ENCODE measurements at regions of chr4 and their contacts with region 1.

Region 1: DNA sequence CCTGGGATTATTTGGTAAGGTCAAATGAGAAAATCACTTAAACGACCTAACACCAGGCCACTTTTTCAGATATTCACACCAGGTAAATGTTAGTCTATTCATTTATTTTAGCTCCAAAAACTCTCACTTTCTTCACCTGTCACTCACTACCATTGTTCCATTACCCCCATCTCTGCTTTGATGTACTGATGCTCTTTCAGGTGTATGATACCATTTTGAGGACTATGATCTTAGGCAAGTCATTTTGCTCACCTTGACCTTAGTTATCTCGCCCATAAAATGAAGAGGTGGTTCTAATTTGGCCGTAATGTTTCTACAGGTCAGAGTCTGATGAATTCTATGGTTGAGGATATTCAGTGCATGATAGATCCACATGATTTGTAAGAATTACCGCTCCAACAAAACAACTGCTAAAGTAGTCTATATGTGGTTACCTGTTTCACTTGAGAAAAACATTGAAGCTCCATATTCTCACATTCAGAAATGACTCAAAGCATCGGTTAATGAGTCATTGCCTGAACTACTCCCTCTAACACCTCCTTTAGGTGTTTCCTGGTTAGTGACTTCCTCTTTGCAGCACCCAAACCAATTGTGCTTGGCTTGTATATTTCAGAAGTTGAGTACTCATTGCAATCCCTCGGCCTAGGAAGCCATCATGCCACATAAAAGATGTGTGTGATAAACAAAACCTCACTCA is 4.5 kb downstream of the DTHD1 start:
- DNase-seq: peak; percentile 77 to 85 (median 81)
- H3K4me3 ChIP-seq: peak overlapping the region in 1 of 2 donors; percentile 8
- H3K4me3 Mint-ChIP-seq: peak overlapping the region; percentile 49 to 87 (median 74)
- H3K27ac ChIP-seq: peak overlapping the region; percentile 74
- H3K27ac Mint-ChIP-seq: peak overlapping the region; percentile 85 to 98 (median 92)
- H3K4me1 ChIP-seq: peaks cover 37% of the 10 kb centered on the region
- H3K4me1 Mint-ChIP-seq: peaks cover 24 to 48% (median 34%) of the 10 kb centered on the region in 4 donors
- H3K27me3 ChIP-seq: no peaks in the 10 kb centered on the region
- H3K27me3 Mint-ChIP-seq: no peaks in the 10 kb centered on the region

Region 2: DNA sequence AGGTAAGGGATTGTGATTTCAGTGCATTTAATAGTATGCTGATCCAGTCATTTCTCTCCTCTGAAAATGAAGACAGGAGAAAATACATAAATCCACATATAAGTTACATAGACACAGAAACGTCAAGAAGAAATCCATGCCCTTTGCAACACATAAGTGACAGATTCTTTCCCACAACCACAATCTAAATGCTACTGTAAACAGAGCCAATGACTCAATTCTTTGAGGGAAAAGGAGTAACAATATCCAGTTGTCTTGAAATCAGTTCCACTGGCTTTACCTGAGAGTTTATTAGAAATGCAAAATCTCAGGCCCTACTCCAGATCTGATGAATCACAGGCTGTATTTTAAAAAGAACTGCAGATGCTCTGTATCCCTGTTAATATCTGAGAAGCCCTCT is 108.0 kb before region 1 on chr4:
- CTCF ChIA-PET with region 1: no interaction called
- POLR2A ChIA-PET with region 1: no interaction called
- intact Hi-C with region 1: no loop called
- DNase-seq: no peak
- H3K4me3 ChIP-seq: no peak overlapping the region
- H3K4me3 Mint-ChIP-seq: no peak overlapping the region
- H3K27ac ChIP-seq: no peak overlapping the region
- H3K27ac Mint-ChIP-seq: no peak overlapping the region
- H3K4me1 ChIP-seq: no peaks in the 10 kb centered on the region
- H3K4me1 Mint-ChIP-seq: peaks cover 14 to 20% (median 16%) of the 10 kb centered on the region in 4 donors
- H3K27me3 ChIP-seq: no peaks in the 10 kb centered on the region
- H3K27me3 Mint-ChIP-seq: no peaks in the 10 kb centered on the region

Region 3: DNA sequence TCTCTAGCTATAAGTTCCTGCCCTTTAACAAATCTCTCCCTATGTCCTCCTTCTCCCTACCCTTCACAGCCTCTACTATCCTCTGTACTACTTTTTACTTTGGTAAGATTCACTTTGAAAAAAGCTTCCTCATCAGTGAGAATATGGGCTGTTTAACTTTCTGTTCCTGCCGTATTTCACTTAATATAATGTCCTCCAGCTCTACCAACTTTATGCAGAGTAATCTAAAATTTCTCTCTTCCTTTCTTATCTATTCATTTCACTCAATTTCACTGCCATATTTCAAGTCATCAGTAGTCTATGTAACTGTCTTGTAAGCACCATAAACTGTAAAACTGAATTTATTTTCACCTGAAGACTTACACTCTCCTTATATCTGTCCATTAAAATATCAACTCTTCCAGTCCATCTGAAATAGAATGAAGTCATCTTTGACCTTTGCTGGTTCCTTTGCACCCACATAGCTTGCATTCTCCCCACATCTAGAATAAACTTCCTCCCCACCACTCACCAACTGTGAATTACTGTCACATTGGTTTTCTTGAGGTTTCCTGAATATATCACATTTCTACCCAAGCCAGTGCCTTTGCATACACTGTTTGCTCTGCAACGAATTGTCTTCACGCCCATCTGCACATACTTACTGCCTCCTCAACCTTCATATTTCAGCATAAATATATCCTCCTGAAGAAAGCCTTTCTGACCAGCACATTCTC is 96.3 kb before region 1 on chr4:
- CTCF ChIA-PET with region 1: no interaction called
- POLR2A ChIA-PET with region 1: interaction called, 3 read pairs
- intact Hi-C with region 1: loop called (anchors 5 kb)
- DNase-seq: peak; percentile 14 to 39 (median 19)
- H3K4me3 ChIP-seq: no peak overlapping the region
- H3K4me3 Mint-ChIP-seq: peak overlapping the region in 7 of 8 donors; percentile 32 to 70 (median 51)
- H3K27ac ChIP-seq: no peak overlapping the region
- H3K27ac Mint-ChIP-seq: peak overlapping the region; percentile 24 to 76 (median 53)
- H3K4me1 ChIP-seq: peaks cover 42% of the 10 kb centered on the region
- H3K4me1 Mint-ChIP-seq: peaks cover 23 to 40% (median 32%) of the 10 kb centered on the region in 4 donors
- H3K27me3 ChIP-seq: no peaks in the 10 kb centered on the region
- H3K27me3 Mint-ChIP-seq: no peaks in the 10 kb centered on the region

Region 4: GRCh38 chr4:36208893-36209473 is 76.9 kb before region 1 on chr4:
- CTCF ChIA-PET with region 1: no interaction called
- POLR2A ChIA-PET with region 1: interaction called, 3 read pairs
- intact Hi-C with region 1: loop called (anchors 5 kb)
- DNase-seq: peak; percentile 33 to 48 (median 43)
- H3K4me3 ChIP-seq: no peak overlapping the region
- H3K4me3 Mint-ChIP-seq: peak overlapping the region in 7 of 8 donors; percentile 25 to 85 (median 64)
- H3K27ac ChIP-seq: no peak overlapping the region
- H3K27ac Mint-ChIP-seq: peak overlapping the region; percentile 4 to 91 (median 66)
- H3K4me1 ChIP-seq: peaks cover 40% of the 10 kb centered on the region
- H3K4me1 Mint-ChIP-seq: peaks cover 37 to 78% (median 54%) of the 10 kb centered on the region in 4 donors
- H3K27me3 ChIP-seq: no peaks in the 10 kb centered on the region
- H3K27me3 Mint-ChIP-seq: no peaks in the 10 kb centered on the region

Region 5: DNA sequence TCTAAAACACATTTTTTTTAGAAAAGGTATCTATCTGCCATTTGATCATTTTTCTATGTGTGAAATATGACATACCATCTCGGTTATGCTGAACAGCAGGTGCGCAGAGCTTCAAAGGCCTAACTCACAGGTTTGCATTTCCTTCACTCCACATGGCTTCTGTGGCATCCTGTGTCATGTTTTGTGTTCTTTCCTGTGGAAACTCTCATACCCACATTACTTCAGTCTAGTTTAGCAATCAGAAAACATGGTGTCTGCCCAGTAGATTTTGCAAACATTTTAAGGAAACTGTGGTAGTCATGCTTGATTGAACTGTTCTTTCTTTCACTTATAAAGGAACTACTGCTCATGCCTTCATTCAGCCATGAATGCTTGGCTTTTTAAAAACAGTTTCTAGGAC is 30.4 kb before region 1 on chr4:
- CTCF ChIA-PET with region 1: interaction called, 16 read pairs
- POLR2A ChIA-PET with region 1: interaction called, 101 read pairs
- intact Hi-C with region 1: loop called (anchors 1 kb)
- DNase-seq: peak; percentile 83 to 91 (median 89)
- H3K4me3 ChIP-seq: no peak overlapping the region
- H3K4me3 Mint-ChIP-seq: peak overlapping the region; percentile 71 to 88 (median 80)
- H3K27ac ChIP-seq: peak overlapping the region; percentile 27
- H3K27ac Mint-ChIP-seq: peak overlapping the region; percentile 83 to 96 (median 92)
- H3K4me1 ChIP-seq: peaks cover 48% of the 10 kb centered on the region
- H3K4me1 Mint-ChIP-seq: peaks cover 35 to 55% (median 40%) of the 10 kb centered on the region in 4 donors
- H3K27me3 ChIP-seq: no peaks in the 10 kb centered on the region
- H3K27me3 Mint-ChIP-seq: no peaks in the 10 kb centered on the region

Region 6: GRCh38 chr4:36269101-36269500 is 16.8 kb before region 1 on chr4:
- CTCF ChIA-PET with region 1: interaction called, 5 read pairs
- POLR2A ChIA-PET with region 1: interaction called, 10 read pairs
- intact Hi-C with region 1: loop called (anchors 2 kb)
- DNase-seq: peak; percentile 56 to 81 (median 76)
- H3K4me3 ChIP-seq: no peak overlapping the region
- H3K4me3 Mint-ChIP-seq: peak overlapping the region in 4 of 8 donors; percentile 9 to 51 (median 39)
- H3K27ac ChIP-seq: peak overlapping the region; percentile 44
- H3K27ac Mint-ChIP-seq: peak overlapping the region; percentile 76 to 94 (median 89)
- H3K4me1 ChIP-seq: peaks cover 26% of the 10 kb centered on the region
- H3K4me1 Mint-ChIP-seq: peaks cover 21 to 36% (median 27%) of the 10 kb centered on the region in 4 donors
- H3K27me3 ChIP-seq: no peaks in the 10 kb centered on the region
- H3K27me3 Mint-ChIP-seq: no peaks in the 10 kb centered on the region

Region 7: GRCh38 chr4:36325499-36325898 is 39.6 kb after region 1 on chr4:
- CTCF ChIA-PET with region 1: interaction called, 5 read pairs
- POLR2A ChIA-PET with region 1: interaction called, 11 read pairs
- intact Hi-C with region 1: loop called (anchors 1 kb)
- DNase-seq: peak; percentile 13 to 48 (median 25)
- H3K4me3 ChIP-seq: no peak overlapping the region
- H3K4me3 Mint-ChIP-seq: peak overlapping the region in 6 of 8 donors; percentile 4 to 63 (median 46)
- H3K27ac ChIP-seq: peak overlapping the region; percentile 22
- H3K27ac Mint-ChIP-seq: peak overlapping the region; percentile 47 to 87 (median 81)
- H3K4me1 ChIP-seq: peaks cover 41% of the 10 kb centered on the region
- H3K4me1 Mint-ChIP-seq: peaks cover 38 to 63% (median 46%) of the 10 kb centered on the region in 4 donors
- H3K27me3 ChIP-seq: no peaks in the 10 kb centered on the region
- H3K27me3 Mint-ChIP-seq: no peaks in the 10 kb centered on the region

Region 8: DNA sequence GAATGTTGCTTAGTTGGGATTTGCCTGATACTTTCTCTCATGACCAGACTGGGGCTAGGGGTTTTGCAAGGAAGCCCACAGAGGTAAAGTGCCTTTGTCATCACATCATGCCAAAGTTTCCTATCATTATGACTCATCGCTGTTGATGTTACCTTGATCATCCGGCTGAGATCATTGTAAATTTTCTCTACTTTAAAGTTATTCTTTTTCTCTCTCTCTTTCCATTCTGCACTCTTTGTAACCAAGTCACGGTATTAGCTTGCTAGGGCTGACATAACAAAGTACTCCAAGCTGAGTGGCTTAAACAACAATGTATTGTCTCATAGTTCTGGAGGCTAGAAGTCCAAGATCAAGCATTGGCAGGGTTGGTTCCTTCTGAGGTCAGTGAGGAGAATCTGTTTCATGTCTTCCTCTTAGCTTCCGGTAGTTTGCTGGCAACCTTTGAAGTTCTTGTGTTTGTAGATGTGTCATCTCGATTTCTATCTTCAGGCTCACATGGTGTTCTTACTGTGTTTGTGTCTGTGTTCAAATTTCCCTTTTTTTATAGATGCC is 108.5 kb after region 1 on chr4:
- CTCF ChIA-PET with region 1: interaction called, 5 read pairs
- POLR2A ChIA-PET with region 1: interaction called, 3 read pairs
- intact Hi-C with region 1: loop called (anchors 1 kb)
- DNase-seq: peak; percentile 72 to 91 (median 81)
- H3K4me3 ChIP-seq: no peak overlapping the region
- H3K4me3 Mint-ChIP-seq: peak overlapping the region in 5 of 8 donors; percentile 8 to 76 (median 46)
- H3K27ac ChIP-seq: peak overlapping the region; percentile 34
- H3K27ac Mint-ChIP-seq: peak overlapping the region; percentile 82 to 92 (median 89)
- H3K4me1 ChIP-seq: peaks cover 16% of the 10 kb centered on the region
- H3K4me1 Mint-ChIP-seq: peaks cover 13 to 25% (median 16%) of the 10 kb centered on the region in 4 donors
- H3K27me3 ChIP-seq: no peaks in the 10 kb centered on the region
- H3K27me3 Mint-ChIP-seq: no peaks in the 10 kb centered on the region

Region 9: GRCh38 chr4:36532670-36533379 is 246.9 kb after region 1 on chr4:
- CTCF ChIA-PET with region 1: no interaction called
- POLR2A ChIA-PET with region 1: no interaction called
- intact Hi-C with region 1: no loop called
- DNase-seq: no peak
- H3K4me3 ChIP-seq: no peak overlapping the region
- H3K4me3 Mint-ChIP-seq: no peak overlapping the region
- H3K27ac ChIP-seq: no peak overlapping the region
- H3K27ac Mint-ChIP-seq: no peak overlapping the region
- H3K4me1 ChIP-seq: no peaks in the 10 kb centered on the region
- H3K4me1 Mint-ChIP-seq: no peaks in the 10 kb centered on the region
- H3K27me3 ChIP-seq: no peaks in the 10 kb centered on the region
- H3K27me3 Mint-ChIP-seq: peaks cover 0 to 2% of the 10 kb centered on the region in 2 donors